ENCODE measurements at regions of chr22 and their contacts with region 1.

Region 1: GRCh38 chr22:35538775-35539321 is 1.8 kb upstream of the RASD2 start:
- DNase-seq: no peak

Region 2: GRCh38 chr22:35516723-35517122 is 22.1 kb before region 1 on chr22:
- intact Hi-C with region 1: loop called in 1 of 2 experiments (anchors 1 kb)
- DNase-seq: no peak

Region 3: DNA sequence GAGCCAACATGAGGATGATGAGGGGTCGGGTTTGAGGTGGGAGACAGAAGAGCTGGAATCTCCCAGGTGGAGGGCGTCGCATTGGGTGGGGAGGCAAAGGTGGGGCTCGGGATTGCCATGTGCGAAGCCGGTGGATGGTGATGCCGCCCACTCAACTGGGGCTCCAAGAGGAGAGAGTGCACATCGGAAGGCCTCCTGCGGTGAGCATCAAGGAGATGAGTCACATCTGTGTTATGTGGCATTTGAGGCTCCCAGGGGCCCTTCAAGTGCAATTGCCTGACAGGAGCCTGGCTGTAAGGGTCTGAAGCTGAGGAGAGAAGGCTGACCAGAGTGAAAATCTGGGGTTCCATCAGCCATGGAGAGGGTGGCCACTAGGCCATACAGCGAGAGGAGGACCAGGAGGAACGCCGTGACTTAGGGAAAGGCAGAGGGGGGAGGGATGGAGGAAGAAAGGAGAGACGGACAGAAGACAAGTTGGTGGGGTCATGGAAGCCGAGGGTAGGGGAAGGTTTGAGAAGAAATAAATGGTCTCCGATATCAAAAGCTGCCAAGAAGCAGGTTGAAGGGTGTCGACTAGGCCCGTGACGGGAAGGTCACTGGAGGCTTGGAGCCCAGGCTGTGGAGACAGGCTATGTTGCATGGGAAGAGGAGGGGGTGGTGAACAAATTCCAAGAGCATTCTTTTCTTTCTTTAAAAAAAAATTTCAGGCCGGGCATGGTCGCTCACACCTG is 23.1 kb after region 1 on chr22:
- intact Hi-C with region 1: loop called in 1 of 2 experiments (anchors 1 kb)
- DNase-seq: no peak

Region 4: DNA sequence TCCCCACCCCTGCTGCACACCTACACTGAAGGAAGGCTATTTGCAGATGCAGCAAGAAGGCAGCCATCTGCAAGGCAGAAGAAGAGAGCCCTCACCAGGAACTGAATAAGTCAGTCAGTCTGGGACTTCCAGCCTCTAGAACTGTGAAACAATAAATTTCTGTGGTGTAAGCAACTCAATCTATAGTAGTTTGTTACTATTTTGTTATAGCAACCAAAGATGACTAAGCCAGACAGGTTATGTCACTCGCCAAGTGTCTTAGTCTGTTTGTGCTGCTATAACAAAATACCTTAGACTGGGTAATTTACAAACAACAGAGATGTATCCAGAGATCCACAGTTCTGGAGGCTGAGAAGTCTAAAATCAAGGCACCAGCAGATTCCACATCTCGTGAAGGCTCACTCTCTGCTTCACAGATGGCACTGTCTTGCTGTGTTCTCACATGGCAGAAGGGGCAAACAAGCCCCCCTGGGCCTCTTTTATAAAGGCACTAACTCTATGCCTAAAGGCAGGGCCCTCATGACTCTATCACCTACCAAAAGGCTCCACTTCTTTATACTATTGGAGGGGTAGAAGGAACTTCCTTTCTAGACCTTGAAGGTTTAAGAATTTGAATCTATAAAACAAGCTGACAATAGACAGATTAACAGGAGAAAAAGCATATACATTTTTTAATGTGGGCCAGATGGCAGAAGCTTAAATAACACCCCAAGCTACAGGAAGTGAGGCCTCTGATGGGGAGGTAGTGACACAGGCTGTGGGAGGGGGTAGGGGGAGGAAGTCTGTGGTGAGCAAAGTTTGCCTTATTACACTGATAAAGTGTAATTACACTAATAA is 121.7 kb after region 1 on chr22:
- intact Hi-C with region 1: no loop called
- DNase-seq: no peak